Head of caudate nucleus (tissue), 42 donors: ENCODE measurements at regions of chr1 and their contacts with region 1.

Region 1: DNA sequence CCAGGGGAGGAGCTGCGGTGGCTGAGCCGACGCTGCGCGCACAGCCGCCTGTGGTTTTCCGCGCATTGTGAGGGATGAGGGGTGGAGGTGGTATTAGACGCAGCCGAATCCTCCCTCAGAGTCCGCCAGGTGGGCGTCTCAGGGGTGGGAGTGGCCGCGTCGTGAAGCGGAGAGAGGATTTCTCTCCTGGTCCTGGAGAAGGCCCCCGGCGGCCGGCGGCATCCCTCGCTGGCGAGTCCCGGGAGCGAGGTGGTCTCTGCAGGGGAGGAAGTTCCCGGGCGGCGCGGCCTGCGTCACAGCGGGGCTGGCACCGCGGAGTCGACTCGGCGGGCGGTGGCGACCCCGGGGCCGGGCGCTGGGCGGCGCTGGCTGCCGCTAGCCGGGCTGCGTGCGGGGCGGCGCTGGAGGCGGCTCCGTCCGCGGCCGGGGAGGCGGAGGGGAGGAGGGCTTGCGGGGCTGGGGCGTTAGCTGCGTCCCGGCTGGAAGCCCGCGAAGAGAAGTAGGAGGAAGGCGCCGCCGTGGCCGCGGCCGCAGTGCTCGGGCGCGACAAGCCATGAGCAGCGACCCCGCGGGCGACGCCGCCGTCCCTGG is at the start of gene LRRC8C:
- DNase-seq: peak; percentile 61 to 94 (median 89)

Region 2: GRCh38 chr1:89994805-89995597 is 362.2 kb after region 1 on chr1 and contains the start of gene ZNF326:
- intact Hi-C with region 1: loop called (anchors 10 kb)
- DNase-seq: peak; percentile 84 to 99 (median 96)